Left lung (tissue), 14 donors: ENCODE measurements at regions of chr5 and their contacts with region 1.

Region 1: DNA sequence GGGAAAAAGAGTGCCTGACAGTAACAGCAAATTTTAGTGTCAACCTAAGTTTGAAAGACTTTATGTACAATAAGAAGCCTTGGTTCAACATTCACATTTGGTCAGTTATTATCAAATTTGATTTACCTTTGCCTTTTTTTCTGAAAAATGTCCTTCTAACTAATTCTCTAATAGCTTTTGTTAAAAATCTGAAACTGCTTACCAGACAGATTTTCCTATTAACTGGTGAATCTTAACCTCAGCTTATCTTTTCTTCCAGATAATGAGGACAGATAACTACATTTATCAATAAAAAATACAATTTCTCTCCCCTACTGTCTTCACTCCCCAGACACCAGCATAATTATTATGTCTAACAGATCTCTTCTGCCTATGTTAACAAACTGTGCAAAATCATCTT is 988.5 kb downstream of the CDH18 start:
- DNase-seq: no peak
- ATAC-seq: no peak
- H3K4me3 ChIP-seq: no peak overlapping the region
- H3K27ac ChIP-seq: no peak overlapping the region
- H3K4me1 ChIP-seq: no peaks in the 10 kb centered on the region
- H3K27me3 ChIP-seq: no peaks in the 10 kb centered on the region
- CTCF ChIP-seq: no peak

Region 2: DNA sequence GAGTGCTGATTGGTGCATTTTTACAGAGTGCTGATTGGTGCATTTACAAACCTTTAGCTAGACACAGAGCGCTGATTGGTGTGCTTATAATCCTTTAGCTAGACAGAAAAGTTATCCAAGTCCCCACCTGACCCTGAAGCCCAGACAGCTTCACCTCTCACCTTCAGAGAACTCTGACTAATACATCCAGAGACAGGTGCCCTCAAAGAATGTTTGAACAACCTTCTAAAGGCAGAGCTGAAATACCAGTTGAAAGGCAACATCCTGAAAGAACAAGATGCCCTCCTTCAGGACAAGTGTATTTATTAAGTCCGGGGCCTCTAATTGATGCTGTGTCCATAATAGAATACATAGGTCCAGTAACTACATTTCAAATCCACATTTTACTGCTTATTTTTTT is 308.1 kb after region 1 on chr5:
- intact Hi-C with region 1: loop called in 1 of 2 experiments (anchors 5 kb)
- DNase-seq: no peak
- ATAC-seq: no peak
- H3K4me3 ChIP-seq: no peak overlapping the region
- H3K27ac ChIP-seq: no peak overlapping the region
- H3K4me1 ChIP-seq: no peaks in the 10 kb centered on the region
- H3K27me3 ChIP-seq: no peaks in the 10 kb centered on the region
- CTCF ChIP-seq: no peak